Mammary epithelial cell (primary cell): ENCODE measurements at regions of chr21 and their contacts with region 1.

Region 1: GRCh38 chr21:38839328-38840286 is 33.9 kb downstream of the ETS2 start:
- DNase-seq: peak; percentile 97
- H3K4me3 ChIP-seq: no peak overlapping the region
- H3K27ac ChIP-seq: peak overlapping the region; percentile 96
- H3K4me1 ChIP-seq: peaks cover 33% of the 10 kb centered on the region
- H3K27me3 ChIP-seq: no peaks in the 10 kb centered on the region
- CTCF ChIP-seq: no peak

Region 2: GRCh38 chr21:38787461-38788274 is 51.9 kb before region 1 on chr21:
- CTCF ChIA-PET with region 1: no interaction called
- dilution Hi-C with region 1: no loop called
- in situ Hi-C with region 1: loop called in 1 of 2 experiments (anchors 10 kb)
- intact Hi-C with region 1: no loop called
- DNase-seq: peak; percentile 99
- H3K4me3 ChIP-seq: peak overlapping the region in 2 of 3 experiments; percentile 33 to 41
- H3K27ac ChIP-seq: peak overlapping the region; percentile 89
- H3K4me1 ChIP-seq: peaks cover 15% of the 10 kb centered on the region
- H3K27me3 ChIP-seq: no peaks in the 10 kb centered on the region
- CTCF ChIP-seq: no peak